ENCODE measurements at regions of chr7 and their contacts with region 1.

Region 1: DNA sequence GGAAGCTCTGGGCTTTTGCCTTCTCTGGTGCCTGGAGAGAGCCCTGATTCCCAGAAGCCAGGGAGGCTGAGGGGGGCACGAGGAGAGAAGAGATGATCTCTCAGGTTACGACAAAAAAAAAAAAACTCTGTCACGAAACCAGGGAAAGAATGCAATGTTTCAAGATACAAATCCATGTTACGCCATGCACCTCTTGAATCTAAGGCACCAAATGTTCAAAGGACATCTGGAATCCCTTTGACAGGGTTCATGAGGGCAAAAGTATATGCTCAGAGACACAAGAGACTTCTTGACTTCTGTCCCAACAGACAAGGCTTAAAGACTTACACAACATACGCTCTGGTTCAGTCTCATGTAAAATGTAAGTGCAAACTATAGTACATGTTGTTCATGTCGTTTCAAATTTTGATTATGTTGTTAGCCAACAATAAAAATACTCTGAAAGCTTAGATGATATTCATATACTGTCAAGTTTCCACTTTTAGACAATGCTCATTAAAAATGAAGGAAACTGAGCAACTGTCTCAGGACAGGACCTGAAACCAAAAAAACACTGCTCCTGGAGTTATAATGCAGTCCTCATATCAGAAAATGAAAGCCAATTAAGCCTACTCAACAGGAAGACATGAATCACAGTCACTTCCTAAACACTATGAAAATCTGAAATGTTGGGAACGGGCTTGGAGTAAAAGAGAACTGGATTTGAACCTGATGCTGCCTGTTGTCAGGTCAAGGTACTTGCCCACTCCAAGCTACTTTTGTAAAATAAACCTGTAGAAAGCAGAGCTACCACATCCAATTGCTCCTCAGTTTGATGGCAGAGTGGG is 72.3 kb downstream of the CHCHD3 start:
- DNase-seq: no peak
- H3K4me3 Mint-ChIP-seq: no peak overlapping the region
- H3K27ac Mint-ChIP-seq: no peak overlapping the region
- H3K4me1 Mint-ChIP-seq: no peaks in the 10 kb centered on the region
- H3K27me3 Mint-ChIP-seq: no peaks in the 10 kb centered on the region

Region 2: DNA sequence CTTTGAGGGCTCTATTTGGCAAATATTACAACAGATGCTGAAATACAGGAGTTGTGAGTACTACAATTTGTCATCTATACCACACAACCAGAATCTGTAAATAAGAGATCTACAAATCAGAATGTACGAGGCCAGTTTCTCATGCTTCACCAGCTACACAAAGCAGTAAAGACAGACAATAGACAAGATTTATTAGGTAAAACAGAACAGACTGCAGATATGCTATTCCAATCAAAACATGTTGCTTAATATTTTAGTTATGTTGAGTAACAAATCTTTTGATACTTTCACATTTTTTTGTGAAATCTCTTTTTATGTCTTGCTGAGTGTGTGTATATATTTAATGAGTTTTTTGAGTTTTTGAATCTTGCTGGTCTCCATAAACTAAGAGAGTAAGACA is 36.9 kb before region 1 on chr7:
- intact Hi-C with region 1: loop called (anchors 1 kb)
- DNase-seq: no peak
- H3K4me3 Mint-ChIP-seq: no peak overlapping the region
- H3K27ac Mint-ChIP-seq: no peak overlapping the region
- H3K4me1 Mint-ChIP-seq: peaks cover 2% of the 10 kb centered on the region
- H3K27me3 Mint-ChIP-seq: no peaks in the 10 kb centered on the region